Naive thymus-derived CD4-positive, alpha-beta T cell (primary cell): ENCODE measurements at regions of chr2 and their contacts with region 1.

Region 1: GRCh38 chr2:96145036-96145847 is at the start of gene DUSP2:
- DNase-seq: peak; percentile 79 to 97 (median 83)
- ATAC-seq: peak; percentile 61
- H3K4me3 ChIP-seq: peak within 1 kb of the TSS; percentile 69
- H3K4me3 Mint-ChIP-seq: peak within 1 kb of the TSS; percentile 90 to 98 (median 95)
- H3K27ac ChIP-seq: peak within 1 kb of the TSS; percentile 99
- H3K27ac Mint-ChIP-seq: peak within 1 kb of the TSS; percentile 96 to 100 (median 99)
- H3K4me1 ChIP-seq: peaks cover 50 to 52% of the 10 kb centered on the region in 2 donors
- H3K4me1 Mint-ChIP-seq: peaks cover 35 to 69% (median 62%) of the 10 kb centered on the region in 7 donors
- H3K27me3 ChIP-seq: no peaks in the 10 kb centered on the region
- H3K27me3 Mint-ChIP-seq: no peaks in the 10 kb centered on the region
- total RNA-seq, gene DUSP2: 22.1 to 255 (median 50.3) TPM

Region 2: DNA sequence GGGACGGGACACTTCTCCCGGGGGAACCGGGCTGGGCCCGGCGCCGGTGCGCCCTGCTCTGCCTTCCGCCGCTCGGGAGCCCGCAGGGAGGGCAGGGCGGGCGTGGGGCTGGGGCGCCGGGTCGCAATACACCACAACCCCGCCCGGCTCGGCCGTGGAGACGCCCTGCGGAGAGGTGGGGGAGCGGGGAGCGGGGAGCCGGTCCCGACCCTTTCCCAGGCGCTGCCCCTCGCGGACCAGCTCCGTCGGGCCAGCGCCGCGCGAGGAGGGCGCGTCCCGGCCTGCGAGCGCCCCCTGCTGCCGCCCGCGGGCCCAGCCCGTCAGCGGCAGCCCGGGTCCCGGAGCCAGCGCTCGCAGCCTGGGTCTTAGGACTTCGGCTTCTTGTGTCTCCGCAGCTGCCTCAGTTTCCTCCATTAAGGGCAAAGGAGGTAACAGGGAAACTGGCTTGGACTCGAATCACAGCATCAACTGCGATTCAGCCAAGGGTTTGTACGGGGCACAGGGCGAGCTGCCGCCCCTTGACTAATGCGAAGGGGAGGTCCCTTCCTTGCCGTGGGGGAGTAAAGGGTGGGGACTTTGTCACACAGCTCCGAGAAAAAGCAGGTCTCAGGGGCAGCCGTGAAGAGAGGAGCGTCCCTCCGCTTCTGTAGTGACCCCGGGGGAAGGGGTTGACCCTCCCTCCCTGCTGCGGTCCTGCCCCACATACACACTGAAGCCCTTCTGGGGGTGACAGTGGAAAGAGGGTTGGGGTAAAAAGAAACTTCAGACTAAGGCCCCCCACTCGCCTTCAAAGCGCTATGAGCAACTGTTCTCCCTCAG is 28.2 kb before region 1 on chr2:
- CTCF ChIA-PET with region 1: no interaction called
- POLR2A ChIA-PET with region 1: interaction called, 3 read pairs
- intact Hi-C with region 1: loop called in 1 of 2 experiments (anchors 2 kb)
- DNase-seq: peak; percentile 36 to 83 (median 70)
- ATAC-seq: peak; percentile 85
- H3K4me3 ChIP-seq: peak overlapping the region; percentile 41
- H3K4me3 Mint-ChIP-seq: peak overlapping the region; percentile 28 to 79 (median 62)
- H3K27ac ChIP-seq: peak overlapping the region; percentile 55
- H3K27ac Mint-ChIP-seq: peak overlapping the region in 1 of 9 donors; percentile 14
- H3K4me1 ChIP-seq: peaks cover 5 to 8% of the 10 kb centered on the region in 2 donors
- H3K4me1 Mint-ChIP-seq: peaks cover 4 to 19% (median 10%) of the 10 kb centered on the region in 7 donors
- H3K27me3 ChIP-seq: no peaks in the 10 kb centered on the region
- H3K27me3 Mint-ChIP-seq: peaks cover 23 to 50% (median 32%) of the 10 kb centered on the region in 5 donors

Region 3: GRCh38 chr2:96164459-96165184 is 19.4 kb after region 1 on chr2:
- CTCF ChIA-PET with region 1: interaction called, 25 read pairs
- POLR2A ChIA-PET with region 1: interaction called, 106 read pairs
- intact Hi-C with region 1: loop called (anchors 1 kb)
- DNase-seq: peak in 8 of 9 donors; percentile 36 to 67 (median 43)
- ATAC-seq: peak; percentile 80
- H3K4me3 ChIP-seq: peak overlapping the region; percentile 39
- H3K4me3 Mint-ChIP-seq: peak overlapping the region; percentile 41 to 80 (median 73)
- H3K27ac ChIP-seq: peak overlapping the region; percentile 84
- H3K27ac Mint-ChIP-seq: peak overlapping the region; percentile 75 to 98 (median 95)
- H3K4me1 ChIP-seq: peaks cover 24 to 55% of the 10 kb centered on the region in 2 donors
- H3K4me1 Mint-ChIP-seq: peaks cover 25 to 47% (median 42%) of the 10 kb centered on the region in 7 donors
- H3K27me3 ChIP-seq: no peaks in the 10 kb centered on the region
- H3K27me3 Mint-ChIP-seq: no peaks in the 10 kb centered on the region

Region 4: GRCh38 chr2:96208143-96209010 is 63.1 kb after region 1 on chr2 and contains the start of gene STARD7:
- CTCF ChIA-PET with region 1: interaction called, 3 read pairs
- POLR2A ChIA-PET with region 1: interaction called, 14 read pairs
- intact Hi-C with region 1: loop called (anchors 1 kb)
- DNase-seq: peak; percentile 93 to 97 (median 95)
- ATAC-seq: peak; percentile 92
- H3K4me3 ChIP-seq: peak within 1 kb of the TSS; percentile 83
- H3K4me3 Mint-ChIP-seq: peak within 1 kb of the TSS; percentile 88 to 100 (median 95)
- H3K27ac ChIP-seq: peak within 1 kb of the TSS; percentile 87
- H3K27ac Mint-ChIP-seq: peak within 1 kb of the TSS; percentile 86 to 99 (median 93)
- H3K4me1 ChIP-seq: peaks cover 30 to 37% of the 10 kb centered on the region in 2 donors
- H3K4me1 Mint-ChIP-seq: peaks cover 37 to 57% (median 51%) of the 10 kb centered on the region in 7 donors
- H3K27me3 ChIP-seq: no peaks in the 10 kb centered on the region
- H3K27me3 Mint-ChIP-seq: no peaks in the 10 kb centered on the region
- total RNA-seq, gene STARD7: 56.5 to 133 (median 74.2) TPM

Region 5: DNA sequence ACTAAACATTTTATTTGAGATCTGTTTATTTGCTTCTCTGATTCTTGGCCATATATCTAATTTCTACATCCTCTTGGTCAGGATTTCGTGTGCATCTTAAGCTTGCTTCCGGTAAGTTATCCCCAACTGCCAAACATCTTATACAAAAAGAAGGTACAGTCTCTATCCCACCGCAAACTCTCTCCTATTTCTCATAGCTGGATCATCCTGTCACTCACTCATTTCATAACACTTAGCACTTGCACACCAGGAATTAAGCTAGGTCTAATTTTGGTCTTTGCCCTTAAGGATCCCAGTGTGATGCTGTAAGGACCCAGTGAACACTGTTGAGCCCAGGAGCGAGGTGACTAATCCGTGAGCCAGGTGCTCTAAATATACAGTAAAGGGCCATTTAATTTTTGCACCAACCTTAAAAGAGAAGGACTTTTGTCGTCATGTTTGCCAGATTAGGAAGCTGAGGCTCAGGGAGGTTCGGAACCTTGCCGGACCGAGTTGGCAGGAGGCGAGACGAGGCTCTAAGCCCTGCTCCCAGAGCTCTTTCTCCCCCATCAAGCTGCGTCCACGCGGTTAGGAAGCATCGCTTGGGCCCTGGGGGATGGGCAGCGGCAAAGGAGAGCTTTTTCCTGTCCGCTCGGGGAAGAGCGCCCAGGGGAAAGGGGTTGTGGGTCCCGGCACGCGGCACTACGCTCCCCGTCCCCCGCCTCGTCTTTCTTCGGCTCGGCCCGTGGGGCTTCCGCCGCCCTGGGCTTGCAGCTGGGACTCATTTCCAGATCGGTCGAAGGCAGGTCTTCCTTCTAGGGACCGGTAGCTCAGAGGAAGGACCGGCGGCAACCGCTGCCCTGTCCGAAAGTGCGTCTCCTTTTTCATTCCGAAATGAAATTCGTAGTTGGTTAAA is 175.7 kb after region 1 on chr2:
- CTCF ChIA-PET with region 1: no interaction called
- POLR2A ChIA-PET with region 1: no interaction called
- intact Hi-C with region 1: loop called in 1 of 2 experiments (anchors 5 kb)
- DNase-seq: peak in 3 of 9 donors; percentile 13 to 62 (median 19)
- ATAC-seq: peak; percentile 28
- H3K4me3 ChIP-seq: peak overlapping the region; percentile 82
- H3K4me3 Mint-ChIP-seq: peak overlapping the region; percentile 86 to 95 (median 91)
- H3K27ac ChIP-seq: peak overlapping the region; percentile 53
- H3K27ac Mint-ChIP-seq: peak overlapping the region in 7 of 9 donors; percentile 6 to 89 (median 62)
- H3K4me1 ChIP-seq: peaks cover 21 to 42% of the 10 kb centered on the region in 2 donors
- H3K4me1 Mint-ChIP-seq: peaks cover 7 to 67% (median 33%) of the 10 kb centered on the region in 7 donors
- H3K27me3 ChIP-seq: no peaks in the 10 kb centered on the region
- H3K27me3 Mint-ChIP-seq: peaks cover 0 to 7% (median 0%) of the 10 kb centered on the region in 5 donors